ENCODE measurements at regions of chr12 and their contacts with region 1.

Region 1: DNA sequence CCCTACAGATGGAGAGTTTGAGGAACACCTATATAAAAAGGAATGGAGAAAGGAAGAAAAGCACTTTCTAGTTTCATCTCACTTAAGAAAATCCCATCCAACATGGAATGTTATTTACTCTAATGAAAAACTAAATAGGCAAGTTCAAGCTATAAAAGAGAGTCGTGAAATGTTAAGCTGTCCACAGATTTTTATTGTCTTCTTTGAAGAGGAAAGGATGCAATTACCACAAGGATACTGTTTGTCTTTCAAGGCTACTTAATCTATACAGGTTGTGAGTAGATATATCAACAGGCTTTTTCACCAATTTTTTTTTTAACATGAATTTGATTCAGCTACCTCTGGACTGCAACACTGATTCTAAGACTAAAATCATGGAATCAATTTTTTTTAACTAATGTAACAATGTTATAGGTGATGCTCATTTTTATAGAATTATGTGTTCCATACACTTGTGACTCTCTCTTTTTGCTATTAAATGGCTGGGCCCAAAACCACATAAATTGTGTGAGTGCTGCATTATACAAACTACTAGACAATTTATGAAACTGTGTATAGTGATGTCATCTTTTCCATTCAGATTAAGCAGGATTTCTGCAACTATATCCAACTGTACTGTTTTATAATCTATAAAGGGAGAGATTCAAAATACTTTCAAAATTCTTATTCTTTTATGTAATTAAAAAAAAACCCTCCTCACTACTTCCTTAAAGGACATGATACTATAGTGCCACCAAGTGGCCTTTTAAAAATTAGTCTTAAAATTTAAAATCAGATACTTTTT is 26.8 kb upstream of the BMAL2 start:
- DNase-seq: no peak
- ATAC-seq: no peak

Region 2: DNA sequence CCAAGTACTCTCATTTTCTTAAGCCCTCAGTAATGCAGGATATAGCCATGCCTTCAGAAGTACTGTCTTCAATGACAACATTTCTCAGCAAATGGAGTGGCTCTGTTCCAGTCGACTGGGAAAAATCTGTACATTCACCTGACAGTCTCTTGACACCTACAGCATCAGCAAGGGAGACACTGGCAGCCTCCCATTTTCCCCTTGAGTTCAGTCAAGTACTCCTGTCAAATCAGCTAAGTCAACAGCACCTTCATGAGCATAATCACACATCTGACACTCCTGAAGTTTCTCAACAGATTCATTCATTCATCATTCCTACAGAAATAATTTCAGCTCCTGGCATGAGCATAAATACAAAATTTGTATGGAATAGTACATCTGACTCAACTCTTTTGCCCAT is 414.2 kb before region 1 on chr12:
- intact Hi-C with region 1: no loop called
- DNase-seq: no peak
- ATAC-seq: no peak

Region 3: GRCh38 chr12:27024291-27024690 is 281.6 kb before region 1 on chr12:
- intact Hi-C with region 1: loop called (anchors 5 kb)
- DNase-seq: no peak
- ATAC-seq: no peak

Region 4: GRCh38 chr12:27142101-27142721 is 163.7 kb before region 1 on chr12:
- intact Hi-C with region 1: loop called (anchors 5 kb)
- DNase-seq: no peak
- ATAC-seq: peak; percentile 86

Region 5: DNA sequence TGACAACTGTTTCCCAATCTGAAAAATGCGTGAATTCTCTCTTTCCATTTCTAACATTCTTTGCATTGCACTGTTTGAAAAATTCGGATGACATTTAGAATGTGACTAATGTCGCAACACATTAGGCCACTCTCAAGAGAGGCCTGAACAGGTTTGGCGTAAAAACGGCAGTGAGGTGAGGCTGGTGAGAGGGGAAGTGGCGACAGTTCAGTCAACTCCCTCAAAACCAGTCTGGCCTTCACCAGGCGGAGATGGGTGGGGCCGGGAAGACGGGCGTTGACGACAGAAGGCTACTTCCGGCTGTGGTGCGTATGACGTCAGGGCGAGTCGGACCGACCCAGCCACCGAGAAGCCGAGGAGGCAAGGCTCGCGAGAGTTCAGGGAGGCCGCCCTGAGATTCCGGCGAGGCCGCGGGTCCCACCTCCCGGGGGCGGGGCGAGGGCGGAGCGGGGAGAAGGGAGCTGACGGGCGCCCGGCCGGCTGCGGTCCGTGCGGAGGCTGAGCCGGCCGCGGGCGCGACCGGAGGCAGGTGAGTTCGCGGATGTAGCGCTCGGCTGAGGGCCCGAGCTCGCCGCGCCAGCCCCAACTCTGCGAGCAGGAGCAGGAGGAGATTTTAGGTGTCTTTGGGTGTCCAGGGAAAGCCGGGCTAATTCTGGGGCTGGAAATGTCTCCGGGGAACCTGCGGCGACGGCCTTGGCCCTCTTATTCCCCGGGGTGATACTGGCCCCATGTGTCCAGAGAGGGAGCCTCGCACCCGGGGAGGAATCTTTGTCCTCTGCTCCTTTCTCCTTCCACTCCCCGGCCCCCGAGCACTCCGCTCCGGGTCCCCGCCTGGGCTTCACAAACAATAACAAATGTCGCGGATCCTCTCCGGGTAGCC is 61.8 kb before region 1 on chr12 and contains the start of gene STK38L:
- intact Hi-C with region 1: loop called (anchors 5 kb)
- DNase-seq: peak; percentile 99
- ATAC-seq: peak; percentile 99
- total RNA-seq, gene STK38L: 48.7 TPM

Region 6: DNA sequence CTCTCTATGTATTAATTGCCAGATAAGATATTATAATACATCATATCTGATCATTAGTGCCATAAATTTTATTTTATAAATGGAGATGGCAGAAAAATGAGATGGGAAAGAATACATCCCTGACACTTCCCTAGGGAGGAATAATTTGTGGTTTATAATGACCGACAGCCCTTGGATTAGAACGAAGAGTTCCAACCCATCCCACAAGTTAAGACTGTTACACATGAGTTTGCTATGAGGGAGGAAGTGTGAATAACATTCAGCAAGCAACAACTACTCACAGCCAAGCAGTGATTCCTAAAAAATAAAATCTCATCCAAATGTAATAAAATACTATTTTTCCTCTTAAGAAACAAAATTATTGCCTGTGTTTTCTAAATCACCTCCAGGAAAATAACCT is 1183.4 kb after region 1 on chr12:
- intact Hi-C with region 1: no loop called
- DNase-seq: no peak
- ATAC-seq: no peak

Measured in Right ventricle myocardium inferior (tissue), 1 donor.